ENCODE measurements at regions of chr12 and their contacts with region 1.

Region 1: DNA sequence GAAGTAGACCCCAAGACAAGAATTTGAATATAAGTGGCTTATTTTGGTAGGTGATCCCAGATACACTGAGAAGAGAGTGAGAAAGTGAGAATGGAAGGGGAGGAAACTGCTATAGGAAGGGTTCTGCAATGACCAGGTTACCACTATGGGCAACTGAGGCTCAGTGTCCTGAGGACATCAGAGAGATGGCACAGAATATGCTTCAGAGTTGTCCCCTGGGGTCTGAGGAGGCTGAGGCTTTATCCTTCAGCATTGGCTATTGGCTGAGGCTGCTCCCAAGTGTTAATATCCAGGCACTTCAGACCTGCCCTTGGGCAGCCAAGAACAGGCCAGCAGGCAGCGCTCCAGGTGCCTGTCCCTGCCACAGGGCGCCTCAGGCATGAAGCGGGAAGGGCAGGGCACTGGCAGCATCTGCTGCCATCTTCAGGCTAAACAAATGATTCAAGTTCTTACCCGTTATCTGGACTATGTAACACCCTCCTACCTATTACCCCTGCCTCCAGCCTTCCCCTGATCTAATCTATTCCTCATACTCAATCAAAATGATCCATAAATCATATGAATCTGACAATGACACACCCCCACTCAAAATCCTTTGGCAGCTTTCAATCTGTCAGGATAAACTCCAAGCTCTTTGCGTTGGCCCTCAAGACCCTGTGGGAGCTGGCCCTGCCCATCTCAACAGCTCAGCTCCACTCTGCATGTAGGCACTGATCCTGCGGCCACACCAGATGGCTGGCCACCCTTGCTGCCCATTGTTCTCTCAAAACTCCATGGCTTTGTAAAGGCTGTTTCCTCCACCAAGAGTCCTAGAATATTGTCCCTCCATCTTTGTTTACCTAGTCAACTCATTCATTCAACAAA is 42.4 kb downstream of the CKAP4 start:
- DNase-seq: peak; percentile 57 to 85 (median 78)
- ATAC-seq: peak; percentile 99 to 100 (median 100)
- H3K4me3 ChIP-seq: no peak overlapping the region
- H3K27ac ChIP-seq: peak overlapping the region in 2 of 12 donors; percentile 31 to 37
- H3K4me1 ChIP-seq: no peaks in the 10 kb centered on the region
- H3K27me3 ChIP-seq: no peaks in the 10 kb centered on the region
- CTCF ChIP-seq: peak in 11 of 12 donors; percentile 24 to 60 (median 46)
- POLR2A ChIP-seq: no peak

Region 2: GRCh38 chr12:105705765-105706164 is 499.7 kb before region 1 on chr12:
- intact Hi-C with region 1: loop called in 1 of 10 experiments (anchors 10 kb)
- DNase-seq: peak in 4 of 5 donors; percentile 32 to 58 (median 46)
- ATAC-seq: peak; percentile 17 to 72 (median 60)
- H3K4me3 ChIP-seq: no peak overlapping the region
- H3K27ac ChIP-seq: peak overlapping the region in 9 of 12 donors; percentile 24 to 61 (median 55)
- H3K4me1 ChIP-seq: peaks cover 0 to 19% (median 11%) of the 10 kb centered on the region in 12 donors
- H3K27me3 ChIP-seq: no peaks in the 10 kb centered on the region
- CTCF ChIP-seq: peak; percentile 72 to 92 (median 86)
- POLR2A ChIP-seq: no peak

Measured in heart left ventricle (tissue), 16 donors.